Sigmoid colon (tissue), 7 donors: ENCODE measurements at regions of chr10 and their contacts with region 1.

Region 1: DNA sequence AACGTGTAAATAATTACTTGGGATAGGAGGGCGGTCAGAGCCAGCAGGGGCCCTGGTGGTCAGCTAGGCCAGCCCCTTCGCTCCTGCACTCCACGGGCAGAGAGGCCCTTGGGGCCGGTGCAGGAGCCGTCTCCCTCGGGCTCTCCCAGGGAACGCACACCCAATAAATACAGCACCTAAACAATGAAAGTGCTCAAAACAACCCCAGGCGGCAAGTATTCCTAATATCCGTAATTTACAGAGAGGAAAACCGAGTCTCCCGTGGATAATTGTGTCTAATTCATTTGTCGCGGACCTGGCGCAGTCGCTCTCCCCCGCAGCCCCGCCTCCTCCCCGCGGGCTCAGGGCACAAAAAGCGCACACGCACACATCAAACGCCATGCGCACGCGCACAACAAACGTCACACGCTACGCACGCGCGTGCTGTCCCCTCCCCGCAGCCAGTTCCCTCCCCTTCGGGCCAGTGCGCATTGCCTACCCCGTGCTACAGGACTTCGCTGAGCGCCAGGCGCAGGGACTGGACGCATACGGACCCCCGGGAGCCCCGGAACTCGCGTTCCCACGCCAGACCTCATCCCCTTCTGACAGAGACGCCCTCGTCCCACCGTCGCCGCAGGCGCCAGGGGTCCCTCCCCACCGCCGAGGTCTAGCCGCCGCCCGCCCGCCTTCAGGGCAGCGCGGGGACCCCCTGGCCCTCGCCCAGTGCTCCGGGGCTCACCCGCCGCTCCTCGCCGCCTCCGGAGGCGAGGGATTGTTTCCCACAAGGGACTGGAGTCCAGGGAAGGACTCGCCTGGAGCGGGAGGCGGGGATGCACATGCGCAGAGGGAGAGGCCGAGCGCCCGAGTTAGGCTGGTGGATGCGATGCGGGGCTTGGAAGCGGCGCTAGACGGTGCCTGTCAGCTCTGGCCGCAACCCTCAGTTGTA is at the start of gene ZNF248:
- DNase-seq: peak; percentile 99
- H3K4me3 ChIP-seq: peak within 1 kb of the TSS; percentile 73 to 97 (median 91)
- H3K27ac ChIP-seq: peak within 1 kb of the TSS; percentile 99 to 100 (median 100)
- H3K4me1 ChIP-seq: peaks cover 0 to 64% (median 53%) of the 10 kb centered on the region in 4 donors
- H3K27me3 ChIP-seq: no peaks in the 10 kb centered on the region
- CTCF ChIP-seq: no peak
- EP300 ChIP-seq: peak; percentile 20 to 96 (median 71)
- POLR2A ChIP-seq: peak; percentile 96 to 98
- total RNA-seq, gene ZNF248: 40.2 to 46.4 (median 43.4) TPM

Region 2: GRCh38 chr10:37976091-37976879 is 118.7 kb after region 1 on chr10 and contains the start of gene ZNF25:
- intact Hi-C with region 1: loop called (anchors 2 kb)
- DNase-seq: peak; percentile 99
- H3K4me3 ChIP-seq: peak within 1 kb of the TSS; percentile 80 to 99 (median 88)
- H3K27ac ChIP-seq: peak within 1 kb of the TSS; percentile 99 to 100 (median 100)
- H3K4me1 ChIP-seq: peaks cover 0 to 20% (median 11%) of the 10 kb centered on the region in 4 donors
- H3K27me3 ChIP-seq: no peaks in the 10 kb centered on the region
- CTCF ChIP-seq: peak; percentile 80 to 96 (median 86)
- EP300 ChIP-seq: no peak
- POLR2A ChIP-seq: peak; percentile 81 to 83
- total RNA-seq, gene ZNF25: 20.5 to 35.7 (median 27.9) TPM